K562 (cell line): ENCODE measurements at regions of chr17 and their contacts with region 1.

Region 1: DNA sequence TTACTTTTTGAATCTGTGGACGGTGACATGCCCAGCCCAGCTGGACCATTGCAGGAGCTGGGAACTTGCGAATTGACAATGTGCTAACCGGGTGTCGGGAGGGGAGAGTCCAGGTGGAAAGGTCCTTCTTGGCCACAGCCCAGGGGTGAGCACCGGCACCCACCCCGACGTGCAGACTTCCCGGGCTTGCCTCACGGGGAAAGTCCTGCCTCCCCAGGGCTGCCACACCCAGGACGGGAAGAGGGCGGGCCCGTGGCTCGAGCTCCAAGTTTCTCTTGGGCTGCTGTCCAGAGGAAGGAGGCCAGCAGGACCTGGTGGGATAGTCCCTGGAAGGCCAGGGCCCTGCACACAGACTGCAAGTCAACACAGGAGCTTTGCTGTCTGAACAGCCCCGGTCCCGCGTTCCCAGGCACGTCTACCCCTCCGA is 17.7 kb downstream of the CARD14 start:
- DNase-seq: peak in 2 of 4 experiments; percentile 59 to 60
- ATAC-seq: no peak
- H3K4me3 ChIP-seq: no peak overlapping the region
- H3K27ac ChIP-seq: no peak overlapping the region
- H3K4me1 ChIP-seq: peaks cover 0 to 30% of the 10 kb centered on the region in 2 experiments; a peak in 3 of 5 replicates
- H3K27me3 ChIP-seq: peaks cover 74 to 95% of the 10 kb centered on the region in 2 experiments
- CTCF ChIP-seq: no peak
- EP300 ChIP-seq: no peak
- POLR2A ChIP-seq: no peak
- RAD21 ChIP-seq: no peak

Region 2: DNA sequence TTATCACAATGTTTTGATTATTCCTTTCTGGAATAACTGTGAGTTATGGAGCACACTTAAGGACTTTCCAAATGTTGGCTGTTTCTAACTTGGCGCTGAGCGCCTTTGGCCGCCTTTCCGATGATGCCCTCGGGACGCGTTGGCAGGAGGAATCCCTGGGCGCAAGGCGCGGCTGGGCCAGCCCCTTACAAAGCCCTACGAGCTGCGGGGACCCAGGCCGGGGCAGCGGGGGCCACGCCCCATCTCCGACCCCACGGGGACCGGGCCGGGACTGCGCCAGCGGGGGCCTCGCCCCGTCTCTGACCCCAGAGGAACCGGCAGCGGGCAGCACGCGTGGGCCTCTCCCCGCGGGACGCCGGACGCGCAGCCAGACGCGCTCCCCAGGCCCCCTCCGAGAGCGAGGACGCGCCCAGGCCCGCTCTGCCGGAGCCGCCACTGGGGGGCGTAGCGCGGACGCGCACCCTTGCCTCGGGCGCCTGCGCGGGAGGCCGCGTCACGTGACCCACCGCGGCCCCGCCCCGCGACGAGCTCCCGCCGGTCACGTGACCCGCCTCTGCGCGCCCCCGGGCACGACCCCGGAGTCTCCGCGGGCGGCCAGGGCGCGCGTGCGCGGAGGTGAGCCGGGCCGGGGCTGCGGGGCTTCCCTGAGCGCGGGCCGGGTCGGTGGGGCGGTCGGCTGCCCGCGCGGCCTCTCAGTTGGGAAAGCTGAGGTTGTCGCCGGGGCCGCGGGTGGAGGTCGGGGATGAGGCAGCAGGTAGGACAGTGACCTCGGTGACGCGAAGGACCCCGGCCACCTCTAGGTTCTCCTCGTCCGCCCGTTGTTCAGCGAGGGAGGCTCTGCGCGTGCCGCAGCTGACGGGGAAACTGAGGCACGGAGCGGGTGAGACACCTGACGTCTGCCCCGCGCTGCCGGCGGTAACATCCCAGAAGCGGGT is 86.2 kb before region 1 on chr17 and contains the start of gene GAA:
- CTCF ChIA-PET with region 1: no interaction called
- POLR2A ChIA-PET with region 1: no interaction called
- in situ Hi-C with region 1: no loop called
- intact Hi-C with region 1: loop called (anchors 10 kb)
- DNase-seq: peak; percentile 86 to 99 (median 98)
- ATAC-seq: peak; percentile 92
- H3K4me3 ChIP-seq: peak within 1 kb of the TSS; percentile 65
- H3K27ac ChIP-seq: peak within 1 kb of the TSS; percentile 52; the same call in 2 of the 3 replicates
- H3K4me1 ChIP-seq: peaks cover 10 to 48% of the 10 kb centered on the region in 2 experiments; a peak in 4 of 5 replicates
- H3K27me3 ChIP-seq: peaks cover 16 to 33% of the 10 kb centered on the region in 2 experiments; a peak in 4 of 5 replicates
- CTCF ChIP-seq: peak; percentile 63 to 85 (median 78)
- EP300 ChIP-seq: no peak
- POLR2A ChIP-seq: peak; percentile 59
- RAD21 ChIP-seq: peak; percentile 42 to 57
- polyA plus RNA-seq, gene GAA: 0.15 to 0.87 TPM

Region 3: DNA sequence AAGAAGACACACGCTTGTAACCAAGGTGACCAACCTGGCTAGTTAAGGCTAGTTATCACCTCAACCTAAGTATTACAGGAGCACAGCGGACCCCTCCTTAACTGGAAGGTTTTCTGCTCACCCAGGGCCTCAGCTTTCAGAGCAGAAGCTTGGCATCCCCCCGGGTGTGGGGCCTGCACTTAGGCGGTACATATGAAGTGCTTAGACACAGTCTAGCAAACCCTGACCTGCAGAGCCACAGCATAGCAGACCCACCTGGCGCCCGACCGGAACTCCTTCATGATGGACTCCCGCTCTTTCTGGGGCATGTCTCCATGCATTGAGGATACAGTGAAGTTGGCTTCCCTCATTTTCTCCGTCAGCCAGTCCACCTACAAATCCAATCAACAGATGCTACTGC is 50.4 kb before region 1 on chr17:
- CTCF ChIA-PET with region 1: no interaction called
- POLR2A ChIA-PET with region 1: no interaction called
- in situ Hi-C with region 1: no loop called
- intact Hi-C with region 1: no loop called
- DNase-seq: no peak
- ATAC-seq: no peak
- H3K4me3 ChIP-seq: no peak overlapping the region
- H3K27ac ChIP-seq: no peak overlapping the region
- H3K4me1 ChIP-seq: no peaks in the 10 kb centered on the region
- H3K27me3 ChIP-seq: no peaks in the 10 kb centered on the region
- CTCF ChIP-seq: no peak
- EP300 ChIP-seq: no peak
- POLR2A ChIP-seq: no peak
- RAD21 ChIP-seq: no peak